Activated CD4-positive, alpha-beta T cell treated with anti-CD3 and anti-CD28 coated beads, Interleukin-2, amount 10 ng/mL, durations not matched to agents 7 days and 5 days (primary cell): ENCODE measurements at regions of chr2 and their contacts with region 1.

Region 1: DNA sequence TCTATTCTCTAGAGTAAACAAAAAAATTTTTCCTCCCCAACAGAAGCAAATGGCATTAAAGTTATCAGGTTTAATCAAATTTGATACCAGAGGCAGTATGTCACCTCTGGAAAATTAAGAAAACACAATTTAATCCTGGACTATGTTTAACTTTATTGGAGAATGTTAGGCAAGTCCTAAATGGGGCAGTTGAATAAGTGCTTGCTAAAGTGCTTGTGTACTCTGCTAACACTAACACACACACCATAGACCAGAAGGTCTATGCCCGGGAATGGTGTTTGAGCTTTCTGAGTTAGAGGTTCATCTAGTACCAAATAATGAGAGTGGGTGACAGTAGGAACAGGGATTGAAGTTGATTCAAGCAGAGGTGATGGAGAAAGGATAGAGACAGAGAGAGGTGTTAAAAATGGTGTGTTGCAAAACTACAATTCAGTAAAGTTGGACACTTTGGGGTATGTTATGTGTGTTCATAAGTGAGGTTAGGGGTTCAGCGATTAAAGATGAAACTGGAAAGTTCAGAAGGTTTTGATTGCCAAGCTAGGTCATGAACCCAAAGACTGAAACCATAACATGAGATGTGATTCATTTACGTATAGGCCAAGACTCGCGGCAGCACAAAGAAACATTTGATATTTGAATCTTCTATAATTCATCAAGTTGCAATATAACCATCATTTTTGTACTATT is 40.5 kb upstream of the PEX13 start:
- DNase-seq: no peak
- H3K4me3 Mint-ChIP-seq: no peak overlapping the region
- H3K27ac Mint-ChIP-seq: peak overlapping the region; percentile 43
- H3K4me1 Mint-ChIP-seq: peaks cover 37% of the 10 kb centered on the region
- H3K27me3 Mint-ChIP-seq: no peaks in the 10 kb centered on the region

Region 2: DNA sequence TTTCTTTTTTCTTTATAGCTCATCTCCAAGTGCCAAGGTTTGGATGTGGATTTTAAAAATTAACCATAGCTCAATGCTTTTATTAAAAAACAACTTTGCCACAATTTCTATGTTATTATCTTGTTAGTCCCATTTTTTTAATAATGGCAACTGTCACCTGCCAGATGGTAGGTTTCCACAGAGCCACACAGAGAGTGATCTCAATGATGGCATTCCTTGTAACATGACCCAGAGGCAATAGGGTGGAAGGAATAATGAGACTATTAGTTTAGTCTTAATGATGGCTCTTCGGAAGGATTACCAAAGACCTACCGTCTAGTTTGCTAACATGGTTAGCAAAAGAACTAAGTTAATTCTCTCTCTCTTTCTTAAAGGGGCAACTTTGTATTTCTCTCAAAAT is 31.7 kb before region 1 on chr2:
- CTCF ChIA-PET with region 1: no interaction called
- POLR2A ChIA-PET with region 1: no interaction called
- DNase-seq: no peak
- H3K4me3 Mint-ChIP-seq: no peak overlapping the region
- H3K27ac Mint-ChIP-seq: no peak overlapping the region
- H3K4me1 Mint-ChIP-seq: peaks cover 21% of the 10 kb centered on the region
- H3K27me3 Mint-ChIP-seq: no peaks in the 10 kb centered on the region

Region 3: DNA sequence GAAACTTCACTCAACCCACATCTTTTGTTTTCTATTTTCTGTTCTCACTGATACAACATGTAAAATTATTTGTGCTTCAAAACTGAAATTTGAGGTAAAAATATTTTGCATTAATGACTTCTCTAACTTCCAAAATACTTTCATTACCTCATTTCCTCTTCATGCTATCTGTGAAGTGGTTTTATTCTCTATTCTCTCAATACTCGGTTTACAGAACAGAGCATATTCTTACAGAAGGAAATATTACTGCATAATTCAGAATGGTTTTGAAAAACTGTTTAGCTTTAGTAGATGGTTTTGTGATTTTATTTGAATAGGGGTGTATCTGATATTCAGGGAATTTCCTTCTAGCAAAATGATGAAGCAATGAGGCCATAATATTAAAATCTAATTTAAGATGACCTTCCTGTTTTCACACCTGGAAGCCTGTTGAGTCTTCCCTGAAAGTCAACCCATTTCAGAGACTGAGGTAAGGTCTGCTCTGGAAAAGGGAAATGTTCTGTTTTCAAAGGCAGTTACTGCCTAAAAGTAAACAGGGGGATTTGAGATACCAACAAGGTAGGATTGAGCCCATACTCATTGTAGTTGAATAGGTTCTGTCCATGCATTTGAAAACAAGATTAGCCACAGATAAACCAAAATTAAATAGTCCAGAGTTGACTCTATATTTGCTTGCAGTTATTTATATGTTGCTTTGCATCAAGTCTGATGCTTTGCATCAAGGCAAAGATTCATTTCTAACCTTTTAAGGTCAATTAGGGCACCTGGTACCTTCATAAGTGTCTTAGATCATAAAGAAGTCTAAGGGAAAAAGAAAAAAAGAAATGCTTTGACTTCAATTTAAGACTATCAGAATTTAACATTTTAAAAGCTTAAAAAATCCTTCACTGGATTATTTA is 10.3 kb before region 1 on chr2:
- CTCF ChIA-PET with region 1: interaction called, 13 read pairs
- POLR2A ChIA-PET with region 1: interaction called, 3 read pairs
- DNase-seq: no peak
- H3K4me3 Mint-ChIP-seq: peak overlapping the region; percentile 33
- H3K27ac Mint-ChIP-seq: peak overlapping the region; percentile 69
- H3K4me1 Mint-ChIP-seq: peaks cover 43% of the 10 kb centered on the region
- H3K27me3 Mint-ChIP-seq: no peaks in the 10 kb centered on the region